ENCODE measurements at regions of chr1 and their contacts with region 1.

Region 1: DNA sequence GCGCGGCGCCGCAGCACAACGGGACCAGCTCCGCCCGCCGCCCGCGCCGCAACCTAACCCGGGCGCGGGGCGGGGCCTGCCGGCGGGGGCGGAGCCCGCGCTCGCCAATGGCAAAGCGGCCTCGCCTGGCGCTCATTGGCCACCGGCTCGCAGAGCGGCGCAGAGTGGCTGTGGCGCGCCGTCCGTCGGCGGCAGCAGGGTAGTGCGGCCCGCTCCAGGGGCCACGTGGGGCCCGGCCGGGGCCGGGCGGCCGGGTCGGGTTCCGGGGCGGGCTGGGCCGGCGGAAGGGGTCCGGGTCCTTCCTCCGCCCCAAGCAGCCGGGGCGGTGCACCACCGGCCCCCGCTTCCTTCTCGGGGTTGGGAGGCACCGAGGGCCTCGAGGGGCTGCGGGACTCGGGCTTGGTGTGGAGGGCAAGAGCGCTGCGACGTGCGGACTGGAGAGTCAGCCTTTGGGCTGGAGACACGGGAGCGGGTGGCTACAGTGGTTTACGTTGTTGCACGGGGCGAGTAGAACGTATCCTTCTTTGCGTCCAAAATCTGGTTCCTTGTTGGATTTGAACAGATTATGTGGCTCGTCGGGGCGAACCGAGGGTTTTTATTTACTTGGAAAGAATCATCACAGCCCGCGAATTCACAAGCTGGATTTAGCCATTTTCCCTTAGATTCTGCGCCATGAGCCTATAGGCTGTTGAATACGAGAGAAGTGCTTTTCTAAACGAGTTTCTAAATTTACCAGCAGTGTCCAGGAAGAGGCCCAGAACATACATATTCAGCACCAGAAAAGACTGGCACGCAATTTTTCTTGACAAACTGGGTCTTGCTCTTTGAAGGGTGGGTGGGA is at the start of gene SRM:
- DNase-seq: peak; percentile 95
- H3K4me3 ChIP-seq: peak within 1 kb of the TSS; percentile 90
- H3K27ac ChIP-seq: peak within 1 kb of the TSS; percentile 58
- H3K4me1 ChIP-seq: peaks cover 28% of the 10 kb centered on the region
- CTCF ChIP-seq: no peak
- total RNA-seq, gene SRM: 52.4 and 65.2 TPM in 2 replicates

Region 2: GRCh38 chr1:11012250-11013171 is 47.7 kb before region 1 on chr1 and contains the start of gene TARDBP:
- CTCF ChIA-PET with region 1: no interaction called
- POLR2A ChIA-PET with region 1: no interaction called
- intact Hi-C with region 1: loop called (anchors 1 kb)
- DNase-seq: peak; percentile 95
- H3K4me3 ChIP-seq: peak within 1 kb of the TSS; percentile 79
- H3K27ac ChIP-seq: peak within 1 kb of the TSS; percentile 71
- H3K4me1 ChIP-seq: peaks cover 18% of the 10 kb centered on the region
- CTCF ChIP-seq: no peak
- total RNA-seq, gene TARDBP: 145 and 177 TPM in 2 replicates

Region 3: GRCh38 chr1:11072216-11072917 is 12.2 kb after region 1 on chr1:
- CTCF ChIA-PET with region 1: no interaction called
- POLR2A ChIA-PET with region 1: interaction called, 11 read pairs
- intact Hi-C with region 1: no loop called
- DNase-seq: peak; percentile 71
- H3K4me3 ChIP-seq: no peak overlapping the region
- H3K27ac ChIP-seq: peak overlapping the region; percentile 54
- H3K4me1 ChIP-seq: peaks cover 19% of the 10 kb centered on the region
- CTCF ChIP-seq: peak; percentile 65